ENCODE measurements at regions of chrX and their contacts with region 1.

Region 1: DNA sequence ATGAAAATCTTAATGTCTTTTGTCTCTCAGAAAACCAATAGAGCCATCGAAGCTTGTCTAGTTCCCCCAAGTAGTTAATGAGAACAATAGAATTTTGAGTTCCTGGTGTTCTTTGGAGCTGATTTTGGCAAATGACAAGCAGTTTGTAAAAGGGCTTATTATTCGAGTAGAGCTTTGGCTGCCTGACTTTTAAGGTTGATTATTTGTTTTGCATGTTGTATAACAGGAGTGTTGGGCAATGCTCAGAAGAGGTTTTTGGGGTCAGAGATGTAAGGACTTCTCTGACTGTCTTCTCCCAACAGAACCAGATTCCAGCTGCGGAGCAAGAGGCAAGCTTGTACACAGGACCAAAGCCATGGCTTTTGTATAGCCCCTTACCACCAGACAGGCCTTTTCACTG is 30.0 kb downstream of the ZCCHC12 start:
- DNase-seq: no peak

Region 2: DNA sequence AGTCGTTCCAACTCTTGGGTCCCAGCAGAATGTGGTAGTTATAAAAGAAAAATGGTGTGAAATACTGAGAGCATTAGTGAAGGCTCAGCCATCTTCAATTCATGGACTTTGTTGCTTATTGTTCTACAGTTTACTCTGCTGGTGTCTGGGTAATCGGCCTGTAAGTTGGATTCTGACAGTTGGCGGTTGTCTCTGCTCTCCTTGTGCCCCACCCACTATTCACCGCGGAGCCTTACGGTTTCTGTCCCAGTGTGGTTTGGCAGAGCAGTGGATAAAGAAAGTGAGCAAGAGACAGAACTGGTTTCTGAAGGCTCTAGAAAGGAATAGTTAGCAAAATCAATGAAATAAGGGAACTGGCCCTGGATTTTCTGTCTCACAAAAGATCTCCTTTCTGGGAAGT is 129.9 kb after region 1 on chrX:
- intact Hi-C with region 1: loop called (anchors 10 kb)
- DNase-seq: no peak

Measured in head of caudate nucleus (tissue), 42 donors.